SK-N-SH (cell line): ENCODE measurements at regions of chr14 and their contacts with region 1.

Region 1: GRCh38 chr14:39015360-39015961 is 87.6 kb downstream of the SEC23A start:
- DNase-seq: peak; percentile 34
- H3K4me3 ChIP-seq: no peak overlapping the region; a peak in 1 of 4 replicates
- H3K27ac ChIP-seq: no peak overlapping the region
- H3K4me1 ChIP-seq: no peaks in the 10 kb centered on the region
- H3K27me3 ChIP-seq: no peaks in the 10 kb centered on the region
- CTCF ChIP-seq: peak; percentile 72
- EP300 ChIP-seq: no peak
- RAD21 ChIP-seq: peak; percentile 74

Region 2: GRCh38 chr14:38989922-38990546 is 25.4 kb before region 1 on chr14:
- CTCF ChIA-PET with region 1: interaction called, 14 read pairs
- POLR2A ChIA-PET with region 1: no interaction called
- DNase-seq: no peak
- H3K4me3 ChIP-seq: no peak overlapping the region
- H3K27ac ChIP-seq: no peak overlapping the region
- H3K4me1 ChIP-seq: no peaks in the 10 kb centered on the region
- H3K27me3 ChIP-seq: no peaks in the 10 kb centered on the region
- CTCF ChIP-seq: no peak
- EP300 ChIP-seq: no peak
- RAD21 ChIP-seq: no peak

Region 3: DNA sequence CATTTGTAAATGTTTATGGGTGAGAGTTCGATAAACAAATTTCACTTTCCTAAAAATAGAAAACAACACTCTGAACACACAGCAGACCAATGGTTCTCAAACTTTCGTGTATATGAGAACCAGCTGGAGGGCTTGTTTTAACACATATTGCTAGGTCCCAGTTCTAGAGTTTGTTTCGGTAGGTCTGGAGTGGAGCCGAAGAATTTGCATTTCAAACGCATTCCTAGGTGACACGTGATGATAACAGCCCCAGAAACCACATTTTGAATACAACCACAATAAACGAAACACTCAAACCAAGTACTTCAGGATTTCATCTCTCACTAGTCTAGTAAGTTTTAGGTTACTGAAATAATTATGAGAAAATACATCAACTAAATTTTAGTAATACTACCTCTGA is 70.5 kb after region 1 on chr14:
- CTCF ChIA-PET with region 1: no interaction called
- POLR2A ChIA-PET with region 1: no interaction called
- DNase-seq: no peak
- H3K4me3 ChIP-seq: no peak overlapping the region
- H3K27ac ChIP-seq: no peak overlapping the region
- H3K4me1 ChIP-seq: no peaks in the 10 kb centered on the region
- H3K27me3 ChIP-seq: no peaks in the 10 kb centered on the region
- CTCF ChIP-seq: no peak
- EP300 ChIP-seq: no peak
- RAD21 ChIP-seq: no peak